Head of caudate nucleus (tissue), 42 donors: ENCODE measurements at regions of chr5 and their contacts with region 1.

Region 1: DNA sequence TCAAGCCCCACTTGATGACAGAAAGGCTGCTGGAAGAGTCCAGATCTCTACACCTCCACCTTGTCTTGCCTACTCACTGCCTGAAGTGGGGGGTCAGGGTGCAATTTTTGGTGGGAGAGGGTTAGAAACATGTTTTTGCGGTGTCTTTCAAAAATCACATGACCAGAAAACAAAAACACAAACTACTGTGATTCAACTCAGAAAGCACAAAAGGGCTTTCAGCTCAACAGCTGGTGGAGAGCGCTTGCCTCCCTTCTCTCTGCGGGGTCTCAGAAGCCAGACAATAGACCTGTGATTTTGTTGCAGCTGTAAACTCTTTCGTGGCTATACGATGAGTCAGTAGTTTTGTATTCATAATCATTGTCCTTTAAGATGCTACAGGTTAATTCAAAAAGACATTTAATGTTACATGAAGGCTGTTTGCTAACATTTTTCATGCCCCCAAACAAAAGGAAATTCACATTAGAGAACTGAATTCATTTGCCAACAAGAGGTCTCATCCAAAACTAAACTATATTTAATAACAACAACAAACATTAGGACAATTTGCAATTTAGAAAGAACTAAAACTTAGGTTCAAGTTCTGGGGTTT is 172.6 kb upstream of the RAI14 start:
- DNase-seq: peak in 32 of 42 donors; percentile 21 to 76 (median 59)

Region 2: DNA sequence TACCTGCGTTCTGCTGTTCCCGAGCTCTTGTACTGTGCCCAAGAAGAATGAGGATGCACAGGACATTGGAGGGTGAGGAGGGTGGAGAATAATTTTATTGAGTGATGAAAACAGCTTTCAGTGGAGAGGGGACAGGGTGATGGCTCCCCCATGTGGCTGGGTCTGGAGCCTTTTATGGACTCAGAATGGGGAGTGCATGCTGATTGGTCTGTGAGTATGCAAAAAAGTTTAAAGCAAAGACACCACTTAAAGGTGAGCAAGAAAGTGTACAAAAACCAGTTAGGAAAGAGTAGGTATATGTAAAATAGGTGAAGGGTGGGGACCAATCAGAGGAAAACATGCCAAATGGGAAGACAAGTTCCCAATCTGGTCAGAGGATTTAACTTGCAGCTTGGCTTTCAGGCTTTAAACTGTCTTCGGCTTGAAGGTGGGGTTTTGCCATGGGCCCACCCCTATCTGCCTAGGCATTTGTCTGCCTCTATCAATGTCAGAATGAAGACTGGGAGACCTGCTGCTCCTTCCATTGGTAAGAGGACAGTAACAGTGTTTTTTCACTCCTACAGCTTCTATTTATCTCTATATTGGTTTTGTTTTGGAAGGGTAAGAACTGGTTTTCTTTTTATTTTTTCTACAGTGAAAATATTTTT is 54.6 kb after region 1 on chr5:
- intact Hi-C with region 1: loop called (anchors 5 kb)
- DNase-seq: peak in 29 of 42 donors; percentile 6 to 78 (median 39)